ENCODE measurements at regions of chr5 and their contacts with region 1.

Region 1: DNA sequence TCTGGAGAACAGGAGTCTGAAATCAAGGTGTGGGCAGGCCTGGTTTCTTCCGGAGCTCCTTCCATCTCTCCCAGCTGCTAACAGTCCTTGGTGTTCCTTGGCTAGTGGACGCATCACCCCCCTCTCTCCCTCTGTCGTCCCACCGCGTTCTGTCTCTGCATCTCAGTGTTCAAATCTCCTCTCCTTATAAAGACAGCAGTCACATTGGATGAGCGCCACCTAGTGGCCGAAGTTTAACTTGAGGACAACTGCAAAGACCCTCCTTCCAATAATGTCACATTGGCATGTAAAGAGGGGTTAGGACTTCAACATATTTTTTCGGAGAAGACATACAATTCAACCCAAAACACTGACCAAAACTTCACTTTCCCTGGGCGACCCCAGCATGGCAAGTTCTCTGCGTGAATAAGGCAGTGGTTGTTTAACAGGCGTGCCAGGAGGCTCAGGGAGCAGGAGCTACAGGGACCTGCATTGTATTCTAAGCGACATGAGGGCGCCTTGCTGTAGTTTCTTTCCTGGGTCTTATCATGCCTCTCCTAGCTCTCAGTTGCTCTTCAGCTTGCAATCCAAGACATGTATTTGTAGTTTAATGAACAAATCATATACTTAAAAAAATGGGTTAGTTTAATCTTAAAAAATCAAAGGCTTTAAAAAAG is 27.9 kb upstream of the BASP1 start:
- DNase-seq: peak; percentile 83
- H3K4me3 Mint-ChIP-seq: no peak overlapping the region
- H3K27ac Mint-ChIP-seq: no peak overlapping the region
- H3K4me1 Mint-ChIP-seq: peaks cover 29% of the 10 kb centered on the region
- H3K27me3 Mint-ChIP-seq: no peaks in the 10 kb centered on the region
- CTCF ChIP-seq: peak; percentile 87

Region 2: GRCh38 chr5:16489322-16489791 is 700.2 kb before region 1 on chr5:
- CTCF ChIA-PET with region 1: interaction called, 18 read pairs
- POLR2A ChIA-PET with region 1: interaction called, 3 read pairs
- intact Hi-C with region 1: no loop called
- DNase-seq: peak; percentile 48
- H3K4me3 Mint-ChIP-seq: no peak overlapping the region
- H3K27ac Mint-ChIP-seq: peak overlapping the region; percentile 29
- H3K4me1 Mint-ChIP-seq: peaks cover 16% of the 10 kb centered on the region
- H3K27me3 Mint-ChIP-seq: no peaks in the 10 kb centered on the region
- CTCF ChIP-seq: peak; percentile 68

Region 3: GRCh38 chr5:16759147-16759773 is 430.2 kb before region 1 on chr5:
- CTCF ChIA-PET with region 1: interaction called, 12 read pairs
- POLR2A ChIA-PET with region 1: no interaction called
- intact Hi-C with region 1: no loop called
- DNase-seq: no peak
- H3K4me3 Mint-ChIP-seq: no peak overlapping the region
- H3K27ac Mint-ChIP-seq: no peak overlapping the region
- H3K4me1 Mint-ChIP-seq: no peaks in the 10 kb centered on the region
- H3K27me3 Mint-ChIP-seq: no peaks in the 10 kb centered on the region
- CTCF ChIP-seq: no peak

Region 4: GRCh38 chr5:16805486-16805885 is 384.0 kb before region 1 on chr5:
- CTCF ChIA-PET with region 1: interaction called, 18 read pairs
- POLR2A ChIA-PET with region 1: interaction called, 4 read pairs
- intact Hi-C with region 1: no loop called
- DNase-seq: no peak
- H3K4me3 Mint-ChIP-seq: no peak overlapping the region
- H3K27ac Mint-ChIP-seq: no peak overlapping the region
- H3K4me1 Mint-ChIP-seq: peaks cover 10% of the 10 kb centered on the region
- H3K27me3 Mint-ChIP-seq: no peaks in the 10 kb centered on the region
- CTCF ChIP-seq: no peak

Region 5: GRCh38 chr5:16926417-16926816 is 263.1 kb before region 1 on chr5:
- CTCF ChIA-PET with region 1: interaction called, 119 read pairs
- POLR2A ChIA-PET with region 1: no interaction called
- intact Hi-C with region 1: no loop called
- DNase-seq: no peak
- H3K4me3 Mint-ChIP-seq: no peak overlapping the region
- H3K27ac Mint-ChIP-seq: no peak overlapping the region
- H3K4me1 Mint-ChIP-seq: peaks cover 2% of the 10 kb centered on the region
- H3K27me3 Mint-ChIP-seq: no peaks in the 10 kb centered on the region
- CTCF ChIP-seq: no peak

Region 6: DNA sequence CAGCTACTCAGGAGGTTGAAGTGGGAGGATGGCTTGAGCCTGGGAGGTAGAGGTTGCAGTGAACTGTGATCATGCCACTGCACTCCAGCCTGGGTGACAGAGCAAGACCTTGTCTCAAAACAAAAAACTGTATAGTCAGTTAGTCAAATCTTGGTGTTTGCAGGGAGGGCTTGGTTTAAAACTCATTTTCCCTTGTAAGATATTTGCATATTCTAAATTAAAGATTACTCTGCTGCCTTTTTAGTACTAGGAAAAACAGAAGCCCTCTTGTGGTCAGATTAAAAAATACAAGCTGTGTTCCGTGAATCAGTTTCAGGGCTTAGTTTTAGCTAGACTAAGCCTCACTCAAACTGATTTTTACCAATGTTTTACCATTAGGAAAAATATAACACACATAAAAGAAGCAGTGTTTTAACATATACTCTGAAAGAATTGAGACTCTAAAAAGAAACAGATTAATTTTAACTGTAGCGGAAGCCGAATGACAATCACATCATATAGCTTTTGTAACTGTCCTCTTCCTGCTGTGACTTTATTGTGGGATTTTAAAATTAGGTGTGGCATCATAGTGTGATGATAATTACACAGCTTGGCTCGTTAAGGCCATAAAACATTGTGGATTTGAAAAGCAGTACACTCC is 56.9 kb before region 1 on chr5:
- CTCF ChIA-PET with region 1: interaction called, 70 read pairs
- POLR2A ChIA-PET with region 1: interaction called, 5 read pairs
- intact Hi-C with region 1: loop called (anchors 5 kb)
- DNase-seq: peak; percentile 49
- H3K4me3 Mint-ChIP-seq: no peak overlapping the region
- H3K27ac Mint-ChIP-seq: no peak overlapping the region
- H3K4me1 Mint-ChIP-seq: peaks cover 7% of the 10 kb centered on the region
- H3K27me3 Mint-ChIP-seq: no peaks in the 10 kb centered on the region
- CTCF ChIP-seq: peak; percentile 36

Region 7: GRCh38 chr5:17204133-17204489 is 14.6 kb after region 1 on chr5:
- CTCF ChIA-PET with region 1: interaction called, 62 read pairs
- POLR2A ChIA-PET with region 1: no interaction called
- intact Hi-C with region 1: no loop called
- DNase-seq: no peak
- H3K4me3 Mint-ChIP-seq: no peak overlapping the region
- H3K27ac Mint-ChIP-seq: no peak overlapping the region
- H3K4me1 Mint-ChIP-seq: no peaks in the 10 kb centered on the region
- H3K27me3 Mint-ChIP-seq: peaks cover 12% of the 10 kb centered on the region
- CTCF ChIP-seq: no peak

Region 8: DNA sequence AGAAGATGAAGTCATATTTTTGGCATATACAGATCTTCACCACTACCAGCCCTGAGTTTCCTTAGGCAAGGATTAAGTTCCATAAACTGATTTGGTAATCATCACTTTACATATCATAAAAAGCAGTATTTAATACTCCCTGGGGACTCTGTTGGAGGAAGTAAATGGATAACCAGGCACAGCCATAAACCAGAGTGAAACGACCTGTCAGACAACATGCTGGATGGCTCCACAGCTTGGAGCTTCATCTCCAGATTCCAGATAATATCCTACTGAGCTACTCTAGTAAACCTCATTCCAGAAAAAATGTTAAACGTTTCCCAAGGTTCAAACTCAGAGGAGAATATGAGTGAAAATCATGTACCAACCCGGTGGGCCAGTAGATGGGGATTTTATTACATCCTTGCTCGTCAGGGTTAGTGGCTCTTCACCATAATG is 137.1 kb after region 1 on chr5:
- CTCF ChIA-PET with region 1: no interaction called
- POLR2A ChIA-PET with region 1: no interaction called
- intact Hi-C with region 1: no loop called
- DNase-seq: no peak
- H3K4me3 Mint-ChIP-seq: no peak overlapping the region
- H3K27ac Mint-ChIP-seq: no peak overlapping the region
- H3K4me1 Mint-ChIP-seq: no peaks in the 10 kb centered on the region
- H3K27me3 Mint-ChIP-seq: no peaks in the 10 kb centered on the region
- CTCF ChIP-seq: no peak

Region 9: GRCh38 chr5:17448877-17449276 is 259.4 kb after region 1 on chr5:
- CTCF ChIA-PET with region 1: no interaction called
- POLR2A ChIA-PET with region 1: no interaction called
- intact Hi-C with region 1: no loop called
- DNase-seq: no peak
- H3K4me3 Mint-ChIP-seq: no peak overlapping the region
- H3K27ac Mint-ChIP-seq: no peak overlapping the region
- H3K4me1 Mint-ChIP-seq: peaks cover 11% of the 10 kb centered on the region
- H3K27me3 Mint-ChIP-seq: no peaks in the 10 kb centered on the region
- CTCF ChIP-seq: no peak

Measured in MCF 10A (cell line).